ENCODE measurements at regions of chr2 and their contacts with region 1.

Region 1: GRCh38 chr2:1550658-1551316 is 137.5 kb downstream of the TPO start:
- DNase-seq: peak; percentile 70
- ATAC-seq: peak; percentile 69
- H3K4me3 ChIP-seq: no peak overlapping the region
- H3K4me3 Mint-ChIP-seq: no peak overlapping the region
- H3K27ac ChIP-seq: no peak overlapping the region
- H3K27ac Mint-ChIP-seq: no peak overlapping the region
- H3K4me1 ChIP-seq: peaks cover 9 to 12% of the 10 kb centered on the region in 2 donors
- H3K4me1 Mint-ChIP-seq: peaks cover 6% of the 10 kb centered on the region
- H3K27me3 ChIP-seq: peaks cover 0 to 15% (median 4%) of the 10 kb centered on the region in 4 experiments
- H3K27me3 Mint-ChIP-seq: peaks cover 32% of the 10 kb centered on the region
- CTCF ChIP-seq: peak; percentile 97

Region 2: GRCh38 chr2:1047485-1047884 is 503.3 kb before region 1 on chr2:
- CTCF ChIA-PET with region 1: no interaction called
- POLR2A ChIA-PET with region 1: no interaction called
- intact Hi-C with region 1: loop called (anchors 5 kb)
- DNase-seq: peak; percentile 42
- ATAC-seq: no peak
- H3K4me3 ChIP-seq: no peak overlapping the region
- H3K4me3 Mint-ChIP-seq: no peak overlapping the region
- H3K27ac ChIP-seq: no peak overlapping the region
- H3K27ac Mint-ChIP-seq: no peak overlapping the region
- H3K4me1 ChIP-seq: no peaks in the 10 kb centered on the region
- H3K4me1 Mint-ChIP-seq: no peaks in the 10 kb centered on the region
- H3K27me3 ChIP-seq: no peaks in the 10 kb centered on the region
- H3K27me3 Mint-ChIP-seq: no peaks in the 10 kb centered on the region
- CTCF ChIP-seq: peak; percentile 30

Region 3: GRCh38 chr2:1775511-1776035 is 224.8 kb after region 1 on chr2:
- CTCF ChIA-PET with region 1: no interaction called
- POLR2A ChIA-PET with region 1: no interaction called
- intact Hi-C with region 1: no loop called
- DNase-seq: no peak
- ATAC-seq: no peak
- H3K4me3 ChIP-seq: no peak overlapping the region
- H3K4me3 Mint-ChIP-seq: no peak overlapping the region
- H3K27ac ChIP-seq: no peak overlapping the region
- H3K27ac Mint-ChIP-seq: no peak overlapping the region
- H3K4me1 ChIP-seq: no peaks in the 10 kb centered on the region
- H3K4me1 Mint-ChIP-seq: no peaks in the 10 kb centered on the region
- H3K27me3 ChIP-seq: no peaks in the 10 kb centered on the region
- H3K27me3 Mint-ChIP-seq: peaks cover 6% of the 10 kb centered on the region
- CTCF ChIP-seq: no peak

Measured in B cell (primary cell).